GM12878 (cell line): ENCODE measurements at regions of chr14 and their contacts with region 1.

Region 1: GRCh38 chr14:65412032-65412846 is at the start of gene FUT8:
- DNase-seq: peak; percentile 80
- ATAC-seq: peak; percentile 89
- H3K4me3 ChIP-seq: peak within 1 kb of the TSS; percentile 97
- H3K27ac ChIP-seq: peak within 1 kb of the TSS; percentile 88
- H3K4me1 ChIP-seq: no peaks in the 10 kb centered on the region
- H3K27me3 ChIP-seq: no peaks in the 10 kb centered on the region
- CTCF ChIP-seq: peak; percentile 51 to 67 (median 61)
- EP300 ChIP-seq: no peak
- POLR2A ChIP-seq: peak; percentile 90
- RAD21 ChIP-seq: peak; percentile 54
- polyA plus RNA-seq, gene FUT8: 25.0 to 45.6 TPM

Region 2: GRCh38 chr14:65206448-65207096 is 205.7 kb before region 1 on chr14:
- CTCF ChIA-PET with region 1: interaction called, 7 read pairs
- POLR2A ChIA-PET with region 1: interaction called, 3 read pairs
- RAD21 ChIA-PET with region 1: interaction called, 10 read pairs
- SMC1A ChIA-PET with region 1: no interaction called
- in situ Hi-C with region 1: no loop called
- intact Hi-C with region 1: loop called (anchors 5 kb)
- DNase-seq: peak; percentile 88
- ATAC-seq: peak; percentile 83
- H3K4me3 ChIP-seq: peak overlapping the region; percentile 56
- H3K27ac ChIP-seq: peak overlapping the region; percentile 96
- H3K4me1 ChIP-seq: peaks cover 63% of the 10 kb centered on the region
- H3K27me3 ChIP-seq: no peaks in the 10 kb centered on the region
- CTCF ChIP-seq: no peak
- EP300 ChIP-seq: peak; percentile 56 to 70; a peak in 3 of 4 replicates
- POLR2A ChIP-seq: peak; percentile 33; the same call in 1 of the 2 replicates
- RAD21 ChIP-seq: no peak

Region 3: GRCh38 chr14:65321370-65321875 is 90.8 kb before region 1 on chr14:
- CTCF ChIA-PET with region 1: interaction called, 61 read pairs
- POLR2A ChIA-PET with region 1: interaction called, 15 read pairs
- RAD21 ChIA-PET with region 1: interaction called, 119 read pairs
- SMC1A ChIA-PET with region 1: interaction called, 107 read pairs
- in situ Hi-C with region 1: no loop called
- intact Hi-C with region 1: loop called (anchors 1 kb)
- DNase-seq: peak; percentile 82
- ATAC-seq: peak; percentile 51
- H3K4me3 ChIP-seq: no peak overlapping the region
- H3K27ac ChIP-seq: peak overlapping the region; percentile 94
- H3K4me1 ChIP-seq: peaks cover 47% of the 10 kb centered on the region
- H3K27me3 ChIP-seq: no peaks in the 10 kb centered on the region
- CTCF ChIP-seq: no peak
- EP300 ChIP-seq: peak in 1 of 2 experiments; percentile 35; a peak in 1 of 4 replicates
- POLR2A ChIP-seq: peak; percentile 37; the same call in 1 of the 2 replicates
- RAD21 ChIP-seq: peak; percentile 11; the same call in 1 of the 2 replicates

Region 4: GRCh38 chr14:65462411-65462810 is 50.2 kb after region 1 on chr14:
- CTCF ChIA-PET with region 1: interaction called, 27 read pairs
- POLR2A ChIA-PET with region 1: interaction called, 3 read pairs
- RAD21 ChIA-PET with region 1: interaction called, 31 read pairs
- SMC1A ChIA-PET with region 1: interaction called, 27 read pairs
- in situ Hi-C with region 1: no loop called
- intact Hi-C with region 1: no loop called
- DNase-seq: peak; percentile 85
- ATAC-seq: peak; percentile 91
- H3K4me3 ChIP-seq: no peak overlapping the region
- H3K27ac ChIP-seq: peak overlapping the region; percentile 82
- H3K4me1 ChIP-seq: peaks cover 24% of the 10 kb centered on the region
- H3K27me3 ChIP-seq: no peaks in the 10 kb centered on the region
- CTCF ChIP-seq: no peak
- EP300 ChIP-seq: peak; percentile 56 to 67; a peak in 3 of 4 replicates
- POLR2A ChIP-seq: no peak
- RAD21 ChIP-seq: peak; percentile 28; the same call in 1 of the 2 replicates

Region 5: GRCh38 chr14:65604936-65605335 is 192.7 kb after region 1 on chr14:
- CTCF ChIA-PET with region 1: interaction called, 9 read pairs
- POLR2A ChIA-PET with region 1: interaction called, 3 read pairs
- RAD21 ChIA-PET with region 1: interaction called, 15 read pairs
- SMC1A ChIA-PET with region 1: interaction called, 20 read pairs
- in situ Hi-C with region 1: no loop called
- intact Hi-C with region 1: loop called (anchors 2 kb)
- DNase-seq: no peak
- ATAC-seq: no peak
- H3K4me3 ChIP-seq: no peak overlapping the region
- H3K27ac ChIP-seq: no peak overlapping the region
- H3K4me1 ChIP-seq: no peaks in the 10 kb centered on the region
- H3K27me3 ChIP-seq: no peaks in the 10 kb centered on the region
- CTCF ChIP-seq: peak in 2 of 3 experiments; percentile 21 to 56; a peak in 2 of 6 replicates
- EP300 ChIP-seq: no peak
- POLR2A ChIP-seq: no peak
- RAD21 ChIP-seq: no peak

Region 6: DNA sequence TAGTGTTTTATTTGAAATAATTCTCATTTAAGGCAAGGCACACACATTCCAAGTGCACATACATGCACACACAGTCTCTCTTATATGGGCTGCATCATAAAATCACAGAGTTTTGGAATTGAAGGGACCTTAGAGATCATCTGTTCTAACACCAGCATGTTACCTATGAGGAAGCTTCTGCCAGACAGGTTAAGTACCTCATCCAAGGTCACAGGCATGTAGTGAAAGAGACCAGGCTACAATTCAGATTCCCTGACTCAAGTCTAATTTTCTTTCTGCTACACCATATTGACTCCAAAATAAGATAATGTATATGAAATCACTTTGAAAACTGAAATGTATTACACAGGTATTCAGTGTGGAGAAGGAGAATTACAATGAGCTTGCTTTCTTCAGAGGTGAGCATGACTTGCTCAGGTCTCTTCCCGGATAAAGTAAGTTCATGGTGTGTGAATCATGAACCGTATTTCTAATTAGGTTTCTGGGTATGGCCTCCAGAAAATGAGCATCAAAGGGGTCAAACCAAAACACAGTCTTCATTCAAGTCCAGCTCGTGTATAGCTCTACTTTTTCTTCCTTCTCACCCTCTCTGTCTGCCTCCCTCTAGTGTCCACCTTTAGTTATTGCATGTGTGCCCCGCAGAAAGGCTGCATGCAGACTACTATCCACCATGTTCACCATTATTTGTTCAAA is 412.2 kb after region 1 on chr14:
- CTCF ChIA-PET with region 1: interaction called, 323 read pairs
- POLR2A ChIA-PET with region 1: interaction called, 5 read pairs
- RAD21 ChIA-PET with region 1: interaction called, 287 read pairs
- SMC1A ChIA-PET with region 1: interaction called, 288 read pairs
- in situ Hi-C with region 1: no loop called
- intact Hi-C with region 1: loop called (anchors 1 kb)
- DNase-seq: peak; percentile 34
- ATAC-seq: peak; percentile 95
- H3K4me3 ChIP-seq: no peak overlapping the region
- H3K27ac ChIP-seq: no peak overlapping the region
- H3K4me1 ChIP-seq: no peaks in the 10 kb centered on the region
- H3K27me3 ChIP-seq: peaks cover under 1 to 8% of the 10 kb centered on the region in 2 experiments; a peak in 3 of 4 replicates
- CTCF ChIP-seq: peak; percentile 89 to 95 (median 91); a peak in 5 of 6 replicates
- EP300 ChIP-seq: no peak
- POLR2A ChIP-seq: no peak
- RAD21 ChIP-seq: peak; percentile 92